ENCODE measurements at regions of chr4 and their contacts with region 1.

Region 1: GRCh38 chr4:973431-974397 is at the start of gene DGKQ:
- DNase-seq: peak; percentile 87
- ATAC-seq: peak; percentile 98
- H3K4me3 Mint-ChIP-seq: peak within 1 kb of the TSS; percentile 60
- H3K27ac Mint-ChIP-seq: no peak within 1 kb of the TSS
- H3K4me1 Mint-ChIP-seq: peaks cover 13% of the 10 kb centered on the region
- H3K27me3 Mint-ChIP-seq: no peaks in the 10 kb centered on the region
- CTCF ChIP-seq: no peak
- total RNA-seq, gene DGKQ: 16.3 and 16.4 TPM in 2 replicates

Region 2: DNA sequence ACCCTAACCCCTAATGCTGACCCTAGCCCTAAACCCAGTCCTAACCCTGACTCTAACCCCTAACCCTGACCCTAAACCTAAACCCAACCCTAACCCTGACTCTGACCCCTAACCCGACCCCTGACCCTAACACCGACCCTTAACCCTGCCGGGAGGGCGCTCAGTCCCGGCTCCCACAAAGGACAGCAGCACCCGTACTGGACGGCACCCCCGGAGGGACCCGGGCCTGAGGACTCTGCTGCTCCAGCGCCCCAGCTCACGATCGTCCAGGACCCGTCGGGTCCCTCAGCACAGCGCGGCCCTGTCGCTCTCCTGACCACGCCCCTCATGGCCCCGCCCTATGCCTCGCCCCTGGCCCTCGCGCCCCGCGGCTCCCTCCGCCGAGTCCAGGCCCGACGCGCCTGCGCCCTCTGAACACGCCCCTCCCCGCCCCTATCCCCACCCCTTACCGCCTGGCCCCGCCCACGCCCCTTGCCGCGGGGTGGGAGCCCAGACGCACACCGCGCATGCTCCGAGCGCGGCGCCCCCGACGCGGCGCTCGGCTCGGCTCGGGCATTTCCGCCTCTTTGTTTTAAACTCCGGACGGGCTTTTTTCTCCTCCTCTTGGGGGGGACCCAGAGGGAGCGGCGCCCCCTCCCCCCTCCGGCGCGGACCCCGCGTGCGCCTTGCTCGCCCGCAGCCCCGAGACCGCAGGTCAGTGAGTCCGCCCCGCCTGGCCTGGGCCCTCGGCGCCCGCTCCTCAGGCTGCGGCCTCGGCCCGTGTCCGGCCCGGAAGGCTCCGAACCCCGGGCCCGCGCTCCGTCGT is 268.2 kb before region 1 on chr4 and contains the start of gene PCGF3:
- CTCF ChIA-PET with region 1: no interaction called
- POLR2A ChIA-PET with region 1: no interaction called
- intact Hi-C with region 1: loop called (anchors 1 kb)
- DNase-seq: peak; percentile 95
- ATAC-seq: peak; percentile 97
- H3K4me3 Mint-ChIP-seq: peak within 1 kb of the TSS; percentile 87
- H3K27ac Mint-ChIP-seq: peak within 1 kb of the TSS; percentile 76
- H3K4me1 Mint-ChIP-seq: peaks cover 35% of the 10 kb centered on the region
- H3K27me3 Mint-ChIP-seq: no peaks in the 10 kb centered on the region
- CTCF ChIP-seq: no peak
- total RNA-seq, gene PCGF3: 51.3 and 59.2 TPM in 2 replicates

Region 3: DNA sequence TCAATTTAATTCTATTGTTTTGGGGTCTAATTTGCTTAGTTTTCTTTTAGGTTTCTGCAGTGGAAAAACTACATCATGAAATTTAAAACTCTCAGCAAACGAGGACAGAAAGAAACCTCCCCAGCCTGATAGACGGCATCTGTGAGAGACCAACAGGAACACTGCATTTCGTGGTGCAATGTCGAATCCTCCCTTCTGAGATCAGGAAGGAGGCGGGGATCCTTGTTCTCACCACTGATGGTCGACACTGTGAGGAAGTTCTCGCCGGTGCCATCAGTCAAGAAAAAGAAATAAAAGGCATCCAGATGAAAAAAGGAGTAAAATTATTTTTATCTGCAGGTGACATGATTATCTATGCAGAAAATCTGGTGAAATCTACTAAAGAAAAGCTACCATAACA is 58.1 kb before region 1 on chr4:
- CTCF ChIA-PET with region 1: no interaction called
- POLR2A ChIA-PET with region 1: no interaction called
- intact Hi-C with region 1: loop called (anchors 2 kb)
- DNase-seq: no peak
- ATAC-seq: no peak
- H3K4me3 Mint-ChIP-seq: peak overlapping the region; percentile 58
- H3K27ac Mint-ChIP-seq: peak overlapping the region; percentile 3
- H3K4me1 Mint-ChIP-seq: peaks cover 52% of the 10 kb centered on the region
- H3K27me3 Mint-ChIP-seq: no peaks in the 10 kb centered on the region
- CTCF ChIP-seq: no peak

Region 4: DNA sequence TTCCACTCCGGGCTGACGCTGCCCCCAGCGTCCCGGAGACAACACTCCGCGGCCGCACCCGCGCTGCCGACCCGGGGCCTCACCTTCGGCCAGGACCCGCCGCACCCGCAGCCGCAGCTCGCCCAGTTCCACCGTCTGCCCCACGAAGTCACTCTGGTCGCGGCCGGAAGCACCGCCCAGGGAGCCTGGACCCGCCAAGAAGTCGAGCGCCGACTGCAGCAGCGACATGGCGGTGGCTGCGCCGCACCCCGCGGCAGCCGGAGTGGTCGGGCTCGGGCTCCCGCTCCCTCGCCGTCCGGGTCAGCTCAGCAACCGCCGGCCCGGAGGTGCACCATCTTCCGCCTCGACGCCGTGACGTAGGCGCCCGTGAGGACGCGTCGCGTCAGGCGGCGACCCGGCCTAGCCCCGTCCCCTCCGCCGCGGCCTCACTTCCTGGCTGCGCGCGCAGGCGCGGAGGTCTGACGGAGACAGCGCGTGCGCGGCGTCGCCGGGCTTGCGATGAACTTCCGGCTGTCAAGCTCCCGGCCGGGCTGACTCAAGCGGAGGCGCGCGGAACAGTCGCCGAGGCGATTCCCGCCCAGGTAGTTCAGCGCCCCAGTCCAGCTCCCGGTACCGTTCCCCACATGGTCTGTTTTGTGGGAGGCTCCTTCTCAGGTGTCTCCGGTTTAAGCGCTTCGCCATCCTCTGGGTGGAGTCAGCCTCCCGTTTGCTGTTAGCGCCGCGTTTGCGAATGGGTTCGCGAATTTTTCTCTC is 41.6 kb before region 1 on chr4 and contains the starts of genes GAK and TMEM175:
- CTCF ChIA-PET with region 1: no interaction called
- POLR2A ChIA-PET with region 1: interaction called, 4 read pairs
- intact Hi-C with region 1: loop called (anchors 1 kb)
- DNase-seq: peak; percentile 99
- ATAC-seq: peak; percentile 90
- H3K4me3 Mint-ChIP-seq: peak within 1 kb of the TSS; percentile 93
- H3K27ac Mint-ChIP-seq: peak within 1 kb of the TSS; percentile 92
- H3K4me1 Mint-ChIP-seq: peaks cover 78% of the 10 kb centered on the region
- H3K27me3 Mint-ChIP-seq: no peaks in the 10 kb centered on the region
- CTCF ChIP-seq: no peak
- total RNA-seq, gene GAK: 159 and 172 TPM in 2 replicates
- total RNA-seq, gene TMEM175: 24.5 and 28.8 TPM in 2 replicates

Region 5: GRCh38 chr4:1026115-1026514 is 52.4 kb after region 1 on chr4:
- CTCF ChIA-PET with region 1: no interaction called
- POLR2A ChIA-PET with region 1: no interaction called
- intact Hi-C with region 1: loop called (anchors 1 kb)
- DNase-seq: peak; percentile 69
- ATAC-seq: peak; percentile 84
- H3K4me3 Mint-ChIP-seq: peak overlapping the region; percentile 24
- H3K27ac Mint-ChIP-seq: peak overlapping the region; percentile 24
- H3K4me1 Mint-ChIP-seq: peaks cover 31% of the 10 kb centered on the region
- H3K27me3 Mint-ChIP-seq: no peaks in the 10 kb centered on the region
- CTCF ChIP-seq: no peak